Right lobe of liver (tissue), 6 donors: ENCODE measurements at regions of chr7 and their contacts with region 1.

Region 1: GRCh38 chr7:50212666-50213621 is 91.6 kb upstream of the IKZF1 start:
- DNase-seq: no peak
- ATAC-seq: peak; percentile 7 to 42 (median 28)
- H3K4me3 ChIP-seq: no peak overlapping the region
- H3K27ac ChIP-seq: no peak overlapping the region
- H3K4me1 ChIP-seq: no peaks in the 10 kb centered on the region
- H3K27me3 ChIP-seq: no peaks in the 10 kb centered on the region
- CTCF ChIP-seq: no peak
- POLR2A ChIP-seq: no peak

Region 2: GRCh38 chr7:50436133-50436806 is 223.3 kb after region 1 on chr7:
- intact Hi-C with region 1: loop called in 1 of 2 experiments (anchors 10 kb)
- DNase-seq: no peak
- ATAC-seq: no peak
- H3K4me3 ChIP-seq: no peak overlapping the region
- H3K27ac ChIP-seq: no peak overlapping the region
- H3K4me1 ChIP-seq: no peaks in the 10 kb centered on the region
- H3K27me3 ChIP-seq: no peaks in the 10 kb centered on the region
- CTCF ChIP-seq: no peak
- POLR2A ChIP-seq: no peak